Activated CD4-positive, alpha-beta T cell treated with anti-CD3 and anti-CD28 coated beads, Interleukin-2, amount 10 ng/mL, durations not matched to agents 24 days and 14 days (primary cell): ENCODE measurements at regions of chr15 and their contacts with region 1.

Region 1: DNA sequence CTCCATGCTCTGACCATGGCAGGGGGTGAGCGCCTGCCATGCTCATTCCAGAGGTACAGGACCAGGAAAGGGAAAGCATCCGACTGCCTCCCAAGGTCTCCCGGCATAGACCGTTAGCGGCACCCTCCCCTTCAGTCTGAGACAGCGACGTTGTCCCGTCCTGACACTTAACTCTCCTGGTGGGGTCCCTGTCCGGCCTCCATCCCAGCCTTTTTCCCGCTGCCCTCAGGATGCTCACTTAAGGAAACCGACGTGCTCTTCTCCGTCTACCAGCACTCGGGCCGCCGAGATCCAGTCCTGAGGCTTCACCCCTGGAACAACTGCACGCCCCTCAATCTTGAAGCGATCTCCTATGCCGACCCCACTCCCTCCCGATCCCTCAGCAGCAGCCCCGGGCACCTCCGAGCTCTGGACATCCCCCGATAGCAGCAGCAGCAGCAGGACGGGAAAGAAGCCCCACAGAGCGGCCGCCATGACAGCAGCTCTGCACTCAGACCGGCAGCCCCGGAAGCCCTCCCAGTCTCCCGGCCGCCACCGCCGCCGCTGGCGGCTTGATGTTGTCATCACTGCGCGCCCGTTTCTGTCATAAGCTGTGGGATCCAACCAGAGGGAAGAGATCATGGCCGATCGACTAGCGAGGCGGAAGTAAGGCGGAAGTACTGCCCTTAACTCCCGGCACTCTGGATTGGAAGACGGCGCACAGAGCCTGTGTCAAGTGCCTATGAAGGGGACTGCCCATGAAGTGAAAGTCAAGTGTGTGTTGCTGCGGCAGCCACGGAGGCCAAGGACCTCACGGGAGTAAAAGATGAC is at the starts of genes EMC7 and PGBD4:
- DNase-seq: peak; percentile 100
- H3K4me3 Mint-ChIP-seq: peak within 1 kb of the TSS; percentile 100
- H3K27ac Mint-ChIP-seq: peak within 1 kb of the TSS; percentile 100
- H3K4me1 Mint-ChIP-seq: peaks cover 30% of the 10 kb centered on the region
- H3K27me3 Mint-ChIP-seq: peaks cover 2% of the 10 kb centered on the region
- total RNA-seq, gene EMC7: 70.9 and 75.8 TPM in 2 replicates
- total RNA-seq, gene PGBD4: 3.7 and 4.0 TPM in 2 replicates

Region 2: DNA sequence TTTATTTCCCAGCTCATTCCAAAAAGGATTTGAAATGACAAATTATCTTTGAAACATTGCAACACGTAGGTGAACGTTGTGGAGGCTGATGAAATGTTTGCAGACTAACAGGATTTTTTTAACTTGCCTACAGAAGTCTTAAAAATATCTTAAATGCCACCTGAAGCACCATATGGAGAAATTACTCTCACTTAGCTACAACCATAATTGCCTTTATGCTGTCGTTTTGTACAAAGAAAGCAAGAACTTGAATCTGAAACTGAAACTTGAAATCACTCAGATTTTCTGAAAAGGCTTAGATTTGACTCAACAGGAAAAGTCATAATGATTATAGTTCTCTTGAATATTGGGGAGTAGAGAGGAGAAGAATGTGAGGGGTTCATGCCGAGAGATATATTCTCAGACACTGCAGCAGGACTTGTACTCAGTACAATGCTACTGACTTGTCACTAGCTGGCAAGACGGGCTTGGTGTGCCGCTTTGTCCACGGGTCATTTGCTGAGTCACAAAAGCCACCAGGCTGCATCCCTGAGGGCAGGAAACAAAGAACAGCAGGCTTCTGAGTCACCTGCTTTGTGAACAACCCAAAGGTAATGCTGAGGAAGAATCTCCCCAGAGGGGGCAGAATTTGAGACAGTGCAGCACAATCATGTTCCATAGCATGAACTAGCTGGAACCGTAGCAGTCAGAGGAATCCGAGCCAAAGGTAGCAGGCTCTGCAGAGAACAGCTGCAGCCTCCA is 899.9 kb before region 1 on chr15:
- intact Hi-C with region 1: loop called (anchors 5 kb)
- DNase-seq: peak; percentile 87
- H3K4me3 Mint-ChIP-seq: peak overlapping the region; percentile 74
- H3K27ac Mint-ChIP-seq: peak overlapping the region; percentile 91
- H3K4me1 Mint-ChIP-seq: peaks cover 25% of the 10 kb centered on the region
- H3K27me3 Mint-ChIP-seq: peaks cover 17% of the 10 kb centered on the region

Region 3: GRCh38 chr15:34070003-34070402 is 31.6 kb before region 1 on chr15:
- intact Hi-C with region 1: no loop called
- DNase-seq: no peak
- H3K4me3 Mint-ChIP-seq: no peak overlapping the region
- H3K27ac Mint-ChIP-seq: no peak overlapping the region
- H3K4me1 Mint-ChIP-seq: no peaks in the 10 kb centered on the region
- H3K27me3 Mint-ChIP-seq: peaks cover 1% of the 10 kb centered on the region

Region 4: DNA sequence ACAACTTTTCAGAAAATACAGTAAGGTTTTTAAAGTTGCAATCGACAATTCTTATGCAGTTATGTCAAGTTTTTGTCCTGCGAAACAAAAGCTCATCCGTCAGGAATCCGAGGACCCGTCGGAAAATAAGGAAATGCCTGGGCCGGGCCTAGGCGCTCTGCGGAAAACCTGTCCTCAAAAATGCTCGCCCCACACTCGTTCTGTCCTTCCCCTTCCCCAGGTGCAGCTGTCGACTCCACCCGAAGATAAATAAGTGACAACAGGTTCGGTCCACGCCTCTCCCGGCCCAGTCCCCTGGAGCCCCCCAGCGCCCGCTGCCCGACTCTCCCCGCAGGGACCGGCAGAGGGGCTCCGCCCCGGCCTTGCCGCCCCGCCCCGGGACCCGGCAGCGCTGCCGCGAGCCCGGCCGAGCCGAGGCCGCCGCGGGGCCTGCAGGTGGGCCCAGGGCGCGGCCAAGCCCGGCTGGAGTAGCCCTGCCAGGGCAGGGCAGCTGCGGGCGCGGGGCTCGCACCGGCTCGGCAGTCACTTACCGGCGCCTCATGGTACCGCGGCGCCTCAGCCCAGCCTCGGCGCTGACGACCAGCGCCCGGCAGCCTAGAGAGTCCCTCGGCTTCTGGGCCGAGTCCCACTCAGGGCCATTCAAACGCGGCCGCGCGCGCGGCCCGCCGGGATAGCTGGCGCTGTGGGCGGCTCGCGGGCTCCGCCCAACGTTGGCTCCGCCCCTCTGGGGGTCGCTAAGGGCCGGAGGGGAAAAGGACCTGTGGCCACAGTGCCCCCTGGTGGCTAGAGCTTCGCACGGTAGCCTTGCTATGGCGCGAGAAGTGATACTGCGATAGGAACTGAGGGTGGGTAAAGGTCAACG is 108.1 kb after region 1 on chr15 and contains the start of gene KATNBL1:
- intact Hi-C with region 1: loop called (anchors 1 kb)
- DNase-seq: peak; percentile 99
- H3K4me3 Mint-ChIP-seq: peak within 1 kb of the TSS; percentile 87
- H3K27ac Mint-ChIP-seq: peak within 1 kb of the TSS; percentile 81
- H3K4me1 Mint-ChIP-seq: peaks cover 16% of the 10 kb centered on the region
- H3K27me3 Mint-ChIP-seq: peaks cover 6% of the 10 kb centered on the region
- total RNA-seq, gene KATNBL1: 41.1 and 44.2 TPM in 2 replicates

Region 5: DNA sequence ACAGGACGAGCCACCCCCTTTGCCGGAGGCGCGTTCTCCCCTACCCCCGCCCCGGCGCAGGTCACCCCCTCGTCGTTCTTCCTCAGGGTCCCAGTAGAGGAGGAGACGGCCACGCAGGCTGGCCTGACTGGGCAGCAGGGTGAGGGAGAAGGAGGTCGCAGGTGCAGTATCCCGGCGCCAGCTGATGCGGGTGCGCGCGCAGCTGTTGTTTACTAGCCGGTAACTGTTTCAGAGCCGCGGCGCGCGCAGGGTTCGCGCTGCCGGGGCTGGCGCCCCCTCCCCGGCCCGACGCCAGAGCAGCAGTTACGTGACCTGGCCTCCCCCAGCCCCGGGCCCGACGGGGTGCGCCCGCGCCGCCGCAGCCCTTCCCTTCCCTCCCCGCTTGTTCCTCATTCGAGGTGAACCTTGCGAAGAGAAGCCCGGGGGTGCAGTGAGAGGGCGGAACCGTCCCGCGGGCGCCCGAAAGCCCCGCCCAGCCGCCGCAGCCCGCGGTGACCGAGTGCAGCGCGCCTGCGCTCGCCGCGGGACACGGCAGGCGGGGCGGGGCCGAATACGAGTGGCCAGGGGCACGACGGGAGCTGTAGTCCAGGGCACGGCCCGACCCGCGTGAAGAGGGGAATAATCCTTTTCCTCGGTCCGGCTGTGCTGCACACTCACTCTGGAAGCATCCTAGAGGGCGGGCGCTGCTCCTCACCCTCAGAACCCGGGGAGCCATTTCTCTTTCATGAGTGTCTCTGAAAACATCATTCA is 236.2 kb after region 1 on chr15 and contains the start of gene SLC12A6:
- intact Hi-C with region 1: loop called (anchors 2 kb)
- DNase-seq: peak; percentile 98
- H3K4me3 Mint-ChIP-seq: peak within 1 kb of the TSS; percentile 97
- H3K27ac Mint-ChIP-seq: peak within 1 kb of the TSS; percentile 94
- H3K4me1 Mint-ChIP-seq: peaks cover 43% of the 10 kb centered on the region
- H3K27me3 Mint-ChIP-seq: no peaks in the 10 kb centered on the region
- total RNA-seq, gene SLC12A6: 18.4 and 19.4 TPM in 2 replicates

Region 6: GRCh38 chr15:34437687-34438086 is 336.1 kb after region 1 on chr15 and contains the start of gene GOLGA8A:
- intact Hi-C with region 1: loop called (anchors 10 kb)
- DNase-seq: peak; percentile 95
- H3K4me3 Mint-ChIP-seq: peak within 1 kb of the TSS; percentile 92
- H3K27ac Mint-ChIP-seq: peak within 1 kb of the TSS; percentile 98
- H3K4me1 Mint-ChIP-seq: peaks cover 20% of the 10 kb centered on the region
- H3K27me3 Mint-ChIP-seq: peaks cover 12% of the 10 kb centered on the region
- total RNA-seq, gene GOLGA8A: 244 and 246 TPM in 2 replicates

Region 7: GRCh38 chr15:34969340-34970097 is 867.9 kb after region 1 on chr15 and contains the start of gene AQR:
- intact Hi-C with region 1: loop called (anchors 1 kb)
- DNase-seq: peak; percentile 97
- H3K4me3 Mint-ChIP-seq: peak within 1 kb of the TSS; percentile 100
- H3K27ac Mint-ChIP-seq: peak within 1 kb of the TSS; percentile 93
- H3K4me1 Mint-ChIP-seq: peaks cover 28% of the 10 kb centered on the region
- H3K27me3 Mint-ChIP-seq: no peaks in the 10 kb centered on the region
- total RNA-seq, gene AQR: 47.3 and 50.2 TPM in 2 replicates